Breast epithelium (tissue), 4 donors: ENCODE measurements at regions of chr1 and their contacts with region 1.

Region 1: DNA sequence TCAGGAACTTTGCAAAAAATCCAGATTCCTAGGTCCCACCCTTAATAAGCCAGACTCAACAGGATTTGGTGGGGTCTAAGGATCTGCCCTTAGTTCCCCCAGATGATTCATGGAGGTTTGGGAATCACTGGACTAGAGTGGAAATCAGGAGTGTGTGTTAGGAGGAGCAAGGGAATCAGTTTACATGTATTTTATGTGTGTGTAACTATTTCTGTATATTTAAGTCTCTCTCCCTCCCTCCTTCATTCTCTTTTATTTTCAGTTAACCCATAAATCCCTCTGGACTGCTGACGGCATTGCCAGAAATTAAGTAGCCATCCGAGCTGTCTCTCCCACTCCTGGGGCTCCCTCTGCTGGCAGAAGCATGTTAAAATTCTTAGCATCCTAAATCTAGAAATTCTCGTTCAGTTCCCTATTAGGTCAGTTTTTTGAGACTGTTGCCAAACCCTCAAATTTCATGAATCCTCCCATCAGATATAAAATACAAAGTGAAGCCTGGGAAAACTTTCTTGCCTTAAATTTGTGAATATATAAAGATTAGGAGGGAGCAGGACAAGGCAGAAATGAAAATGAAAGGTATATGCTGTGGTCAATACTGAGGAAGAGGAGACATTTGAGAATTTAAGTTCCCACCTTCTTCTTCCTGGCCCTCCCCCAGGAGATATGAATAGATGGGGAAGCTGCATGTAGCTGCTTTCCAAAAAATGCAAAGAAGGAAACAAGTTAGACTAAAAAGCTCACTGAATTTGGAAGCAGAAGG is 11.7 kb upstream of the HSD11B1 start:
- DNase-seq: peak; percentile 41 to 60
- H3K4me3 ChIP-seq: no peak overlapping the region
- H3K27ac ChIP-seq: no peak overlapping the region
- H3K4me1 ChIP-seq: no peaks in the 10 kb centered on the region
- H3K27me3 ChIP-seq: no peaks in the 10 kb centered on the region
- CTCF ChIP-seq: peak; percentile 72 to 88 (median 85)
- POLR2A ChIP-seq: no peak

Region 2: DNA sequence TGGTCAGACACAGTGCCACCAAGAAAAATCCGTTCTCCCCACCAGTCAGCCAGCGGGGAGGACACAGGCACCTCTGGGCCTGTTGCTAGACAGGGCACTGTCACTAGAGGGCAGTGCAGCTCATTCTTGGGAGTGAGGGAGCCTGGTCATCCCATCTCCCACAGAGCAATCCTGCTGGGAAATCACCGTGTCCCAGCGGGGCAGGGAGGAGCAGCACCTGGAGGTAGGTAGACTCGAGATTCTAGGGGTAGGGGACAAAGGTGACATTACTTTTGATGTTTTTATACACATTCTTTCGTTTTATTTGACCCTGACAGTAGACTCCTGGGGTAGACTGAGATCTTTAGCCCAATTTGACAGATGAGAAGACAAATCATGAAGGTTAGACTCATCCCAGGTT is 116.1 kb before region 1 on chr1:
- intact Hi-C with region 1: loop called (anchors 10 kb)
- DNase-seq: peak; percentile 60 to 78
- H3K4me3 ChIP-seq: no peak overlapping the region
- H3K27ac ChIP-seq: no peak overlapping the region
- H3K4me1 ChIP-seq: no peaks in the 10 kb centered on the region
- H3K27me3 ChIP-seq: peaks cover 0 to 11% of the 10 kb centered on the region in 2 donors
- CTCF ChIP-seq: peak; percentile 74 to 91 (median 89)
- POLR2A ChIP-seq: no peak

Region 3: DNA sequence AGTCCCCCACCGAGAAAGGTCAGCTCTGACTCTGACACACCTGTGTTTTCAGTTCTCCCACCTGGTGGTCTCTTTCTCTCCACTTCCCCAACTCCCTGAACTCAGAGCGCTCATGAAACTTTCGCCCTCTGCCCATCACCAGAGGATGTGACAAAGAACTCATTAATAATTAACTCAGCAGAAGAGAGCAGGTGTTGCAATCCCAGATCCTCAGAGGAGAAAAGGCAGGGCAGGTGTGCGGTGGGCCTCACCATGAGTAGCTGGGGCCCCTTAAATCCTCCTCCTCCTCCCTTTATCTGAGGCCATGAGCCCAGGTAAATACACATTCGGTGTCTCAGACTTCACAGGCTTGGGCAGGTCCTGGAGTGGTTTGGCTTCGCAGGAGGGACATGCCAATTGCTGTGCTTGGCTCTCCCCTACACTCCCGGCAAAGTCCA is 39.0 kb before region 1 on chr1:
- intact Hi-C with region 1: loop called (anchors 2 kb)
- DNase-seq: no peak
- H3K4me3 ChIP-seq: no peak overlapping the region
- H3K27ac ChIP-seq: peak overlapping the region; percentile 66 to 88
- H3K4me1 ChIP-seq: peaks cover 0 to 4% of the 10 kb centered on the region in 2 donors
- H3K27me3 ChIP-seq: no peaks in the 10 kb centered on the region
- CTCF ChIP-seq: no peak
- POLR2A ChIP-seq: no peak

Region 4: GRCh38 chr1:209710093-209710492 is 17.2 kb after region 1 on chr1:
- intact Hi-C with region 1: no loop called
- DNase-seq: no peak
- H3K4me3 ChIP-seq: no peak overlapping the region
- H3K27ac ChIP-seq: no peak overlapping the region
- H3K4me1 ChIP-seq: no peaks in the 10 kb centered on the region
- H3K27me3 ChIP-seq: no peaks in the 10 kb centered on the region
- CTCF ChIP-seq: no peak
- POLR2A ChIP-seq: no peak